ENCODE measurements at regions of chr12 and their contacts with region 1.

Region 1: GRCh38 chr12:54891717-54892554 is 37.6 kb downstream of the MUCL1 start:
- DNase-seq: peak; percentile 96
- ATAC-seq: peak; percentile 99
- H3K4me3 ChIP-seq: no peak overlapping the region
- H3K27ac ChIP-seq: peak overlapping the region; percentile 57
- H3K4me1 ChIP-seq: peaks cover 21% of the 10 kb centered on the region
- H3K27me3 ChIP-seq: no peaks in the 10 kb centered on the region
- CTCF ChIP-seq: no peak

Region 2: GRCh38 chr12:54870604-54871003 is 21.3 kb before region 1 on chr12:
- CTCF ChIA-PET with region 1: no interaction called
- POLR2A ChIA-PET with region 1: no interaction called
- intact Hi-C with region 1: loop called (anchors 1 kb)
- DNase-seq: peak; percentile 77
- ATAC-seq: peak; percentile 99
- H3K4me3 ChIP-seq: no peak overlapping the region
- H3K27ac ChIP-seq: no peak overlapping the region
- H3K4me1 ChIP-seq: peaks cover 15% of the 10 kb centered on the region
- H3K27me3 ChIP-seq: no peaks in the 10 kb centered on the region
- CTCF ChIP-seq: no peak

Region 3: GRCh38 chr12:54879150-54879549 is 12.8 kb before region 1 on chr12:
- CTCF ChIA-PET with region 1: no interaction called
- POLR2A ChIA-PET with region 1: no interaction called
- intact Hi-C with region 1: loop called (anchors 2 kb)
- DNase-seq: no peak
- ATAC-seq: peak; percentile 43
- H3K4me3 ChIP-seq: no peak overlapping the region
- H3K27ac ChIP-seq: no peak overlapping the region
- H3K4me1 ChIP-seq: peaks cover 25% of the 10 kb centered on the region
- H3K27me3 ChIP-seq: no peaks in the 10 kb centered on the region
- CTCF ChIP-seq: no peak